Esophagus squamous epithelium (tissue), 5 donors: ENCODE measurements at regions of chr18 and their contacts with region 1.

Region 1: DNA sequence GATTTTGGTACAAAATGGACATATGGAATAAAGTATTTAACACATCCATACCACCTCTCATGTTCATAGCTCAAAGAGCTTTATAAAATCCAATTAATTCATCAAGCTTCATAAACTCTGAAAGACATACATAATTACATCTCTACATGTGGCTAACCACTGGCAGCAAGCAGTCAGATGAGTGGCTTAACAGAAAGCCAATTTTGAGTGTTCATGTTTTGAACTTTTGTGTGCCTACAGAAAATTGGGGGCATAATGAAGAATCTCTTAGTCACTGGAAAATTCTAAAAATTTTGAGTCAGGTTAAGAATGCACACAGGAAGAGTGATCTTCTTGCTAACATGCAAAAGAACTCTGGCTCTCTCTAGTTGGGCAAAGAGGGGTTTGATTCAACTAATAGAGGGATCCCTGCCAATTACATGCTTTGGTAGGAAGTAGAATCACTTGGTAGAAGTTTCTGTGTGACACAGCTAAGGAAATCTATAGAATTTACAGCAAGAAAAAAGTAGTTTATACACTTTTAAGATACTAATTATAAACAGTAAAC is 287.4 kb downstream of the NOL4 start:
- DNase-seq: no peak
- H3K4me3 ChIP-seq: no peak overlapping the region
- H3K27ac ChIP-seq: no peak overlapping the region
- H3K4me1 ChIP-seq: no peaks in the 10 kb centered on the region
- H3K27me3 ChIP-seq: no peaks in the 10 kb centered on the region
- CTCF ChIP-seq: no peak
- POLR2A ChIP-seq: no peak

Region 2: GRCh38 chr18:33870059-33870458 is 67.3 kb before region 1 on chr18:
- intact Hi-C with region 1: loop called (anchors 10 kb)
- DNase-seq: no peak
- H3K4me3 ChIP-seq: no peak overlapping the region
- H3K27ac ChIP-seq: no peak overlapping the region
- H3K4me1 ChIP-seq: no peaks in the 10 kb centered on the region
- H3K27me3 ChIP-seq: no peaks in the 10 kb centered on the region
- CTCF ChIP-seq: no peak
- POLR2A ChIP-seq: no peak

Region 3: DNA sequence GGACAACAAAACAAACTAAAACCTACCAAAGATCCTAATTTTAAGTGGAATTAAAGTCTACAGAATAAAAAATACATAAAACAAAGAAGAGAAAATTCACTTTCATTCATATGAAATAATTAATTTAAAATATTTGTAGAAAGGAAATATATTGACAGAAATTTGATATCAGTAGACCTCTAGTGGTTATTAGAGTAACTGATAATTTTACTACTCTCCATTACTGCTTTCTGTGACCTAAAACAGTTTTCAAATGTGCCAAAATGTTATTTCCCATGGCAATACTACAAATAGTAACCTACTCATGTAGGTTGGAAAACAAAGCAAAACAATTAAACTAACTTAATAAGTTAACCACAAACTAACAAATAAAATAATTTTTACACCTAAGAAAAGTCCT is 140.3 kb after region 1 on chr18:
- intact Hi-C with region 1: no loop called
- DNase-seq: no peak
- H3K4me3 ChIP-seq: no peak overlapping the region
- H3K27ac ChIP-seq: no peak overlapping the region
- H3K4me1 ChIP-seq: no peaks in the 10 kb centered on the region
- H3K27me3 ChIP-seq: no peaks in the 10 kb centered on the region
- CTCF ChIP-seq: no peak
- POLR2A ChIP-seq: no peak